H1 (cell line): ENCODE measurements at regions of chr12 and their contacts with region 1.

Region 1: DNA sequence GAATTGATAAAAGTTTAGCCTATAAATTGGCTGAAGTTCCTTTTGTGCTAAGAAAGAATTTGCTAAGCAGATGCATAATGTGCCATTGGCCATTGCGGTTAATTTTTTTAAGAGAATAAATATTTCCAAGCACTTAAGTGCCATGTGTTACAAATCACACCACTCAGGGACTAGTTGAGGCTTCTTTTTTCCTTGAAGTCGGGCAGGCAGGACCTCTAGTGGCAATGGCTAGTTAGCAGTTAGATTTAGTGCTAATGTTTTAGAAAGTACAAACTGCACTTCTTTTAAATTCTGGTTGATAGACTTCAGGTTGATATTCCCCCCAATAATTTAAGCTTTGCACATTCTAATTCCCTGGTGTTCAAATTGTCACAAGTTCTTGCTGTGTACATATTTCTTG is 294.3 kb downstream of the APAF1 start:
- DNase-seq: no peak
- H3K4me3 ChIP-seq: no peak overlapping the region
- H3K27ac ChIP-seq: no peak overlapping the region
- H3K4me1 ChIP-seq: peaks cover 0 to 7% (median 2%) of the 10 kb centered on the region in 4 experiments; a peak in 2 of 7 replicates
- H3K27me3 ChIP-seq: no peaks in the 10 kb centered on the region
- CTCF ChIP-seq: peak in 2 of 3 experiments; percentile 76 to 78; a peak in 3 of 4 replicates
- EP300 ChIP-seq: no peak
- POLR2A ChIP-seq: no peak
- RAD21 ChIP-seq: peak; percentile 85 to 90

Region 2: GRCh38 chr12:98725476-98726247 is 213.7 kb before region 1 on chr12:
- CTCF ChIA-PET with region 1: interaction called, 37 read pairs
- POLR2A ChIA-PET with region 1: no interaction called
- DNase-seq: no peak
- H3K4me3 ChIP-seq: no peak overlapping the region
- H3K27ac ChIP-seq: no peak overlapping the region
- H3K4me1 ChIP-seq: no peaks in the 10 kb centered on the region
- H3K27me3 ChIP-seq: no peaks in the 10 kb centered on the region
- CTCF ChIP-seq: peak; percentile 63 to 80 (median 77)
- EP300 ChIP-seq: no peak
- POLR2A ChIP-seq: no peak
- RAD21 ChIP-seq: peak; percentile 87 to 88

Region 3: DNA sequence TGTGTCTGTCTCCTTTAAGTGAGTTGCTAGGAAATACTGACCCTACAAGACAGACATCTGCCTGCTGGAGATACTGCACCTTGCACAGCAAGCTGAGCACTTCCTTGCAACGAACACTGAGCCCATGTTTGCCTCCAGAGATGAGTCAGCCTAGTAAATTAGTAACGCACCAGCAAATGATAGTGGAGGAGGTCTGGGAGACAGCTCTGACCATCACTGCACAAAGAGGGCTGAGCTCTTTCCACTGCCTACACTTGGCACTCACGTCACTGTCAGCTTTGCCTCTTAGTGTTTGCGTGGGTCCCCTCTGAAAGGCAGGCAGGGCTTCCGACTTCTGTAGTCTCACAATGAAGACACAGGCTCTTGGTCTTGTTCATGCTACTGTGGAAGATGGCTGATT is 185.3 kb before region 1 on chr12:
- CTCF ChIA-PET with region 1: interaction called, 13 read pairs
- POLR2A ChIA-PET with region 1: no interaction called
- DNase-seq: no peak
- H3K4me3 ChIP-seq: no peak overlapping the region
- H3K27ac ChIP-seq: no peak overlapping the region
- H3K4me1 ChIP-seq: no peaks in the 10 kb centered on the region; a peak in 1 of 7 replicates
- H3K27me3 ChIP-seq: no peaks in the 10 kb centered on the region
- CTCF ChIP-seq: no peak
- EP300 ChIP-seq: no peak
- POLR2A ChIP-seq: no peak
- RAD21 ChIP-seq: no peak

Region 4: GRCh38 chr12:98922871-98923270 is 16.5 kb before region 1 on chr12:
- CTCF ChIA-PET with region 1: interaction called, 23 read pairs
- POLR2A ChIA-PET with region 1: no interaction called
- DNase-seq: no peak
- H3K4me3 ChIP-seq: no peak overlapping the region
- H3K27ac ChIP-seq: no peak overlapping the region
- H3K4me1 ChIP-seq: no peaks in the 10 kb centered on the region
- H3K27me3 ChIP-seq: no peaks in the 10 kb centered on the region
- CTCF ChIP-seq: no peak
- EP300 ChIP-seq: no peak
- POLR2A ChIP-seq: no peak
- RAD21 ChIP-seq: no peak